ENCODE measurements at regions of chr22 and their contacts with region 1.

Region 1: DNA sequence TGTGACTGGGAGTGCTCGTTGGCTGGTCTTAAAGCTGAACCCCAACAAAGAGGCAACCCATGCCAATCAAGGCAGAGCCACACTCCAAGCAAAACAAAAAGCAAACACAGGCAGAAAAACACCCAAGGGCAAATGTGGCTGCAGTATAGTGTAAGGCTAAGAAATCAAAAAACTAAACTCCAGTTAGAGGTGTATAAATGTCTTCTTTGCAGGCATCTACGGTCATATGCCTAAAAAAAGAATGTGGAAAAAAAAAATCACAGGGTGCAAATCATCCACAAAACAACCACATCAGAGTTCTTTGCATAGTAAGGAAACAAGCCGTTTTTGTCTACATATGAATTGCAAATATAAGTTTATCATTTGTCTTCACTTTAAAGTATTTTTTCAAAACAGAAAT is 27.8 kb downstream of the ARFGAP3 start:
- DNase-seq: no peak
- ATAC-seq: no peak
- H3K4me3 ChIP-seq: no peak overlapping the region
- H3K4me3 Mint-ChIP-seq: peak overlapping the region in 1 of 3 donors; percentile 28
- H3K27ac ChIP-seq: no peak overlapping the region
- H3K27ac Mint-ChIP-seq: peak overlapping the region in 1 of 2 donors; percentile 72
- H3K4me1 ChIP-seq: peaks cover 3 to 20% of the 10 kb centered on the region in 2 experiments
- H3K4me1 Mint-ChIP-seq: peaks cover 12 to 20% (median 17%) of the 10 kb centered on the region in 3 donors
- H3K27me3 ChIP-seq: no peaks in the 10 kb centered on the region
- H3K27me3 Mint-ChIP-seq: no peaks in the 10 kb centered on the region

Region 2: DNA sequence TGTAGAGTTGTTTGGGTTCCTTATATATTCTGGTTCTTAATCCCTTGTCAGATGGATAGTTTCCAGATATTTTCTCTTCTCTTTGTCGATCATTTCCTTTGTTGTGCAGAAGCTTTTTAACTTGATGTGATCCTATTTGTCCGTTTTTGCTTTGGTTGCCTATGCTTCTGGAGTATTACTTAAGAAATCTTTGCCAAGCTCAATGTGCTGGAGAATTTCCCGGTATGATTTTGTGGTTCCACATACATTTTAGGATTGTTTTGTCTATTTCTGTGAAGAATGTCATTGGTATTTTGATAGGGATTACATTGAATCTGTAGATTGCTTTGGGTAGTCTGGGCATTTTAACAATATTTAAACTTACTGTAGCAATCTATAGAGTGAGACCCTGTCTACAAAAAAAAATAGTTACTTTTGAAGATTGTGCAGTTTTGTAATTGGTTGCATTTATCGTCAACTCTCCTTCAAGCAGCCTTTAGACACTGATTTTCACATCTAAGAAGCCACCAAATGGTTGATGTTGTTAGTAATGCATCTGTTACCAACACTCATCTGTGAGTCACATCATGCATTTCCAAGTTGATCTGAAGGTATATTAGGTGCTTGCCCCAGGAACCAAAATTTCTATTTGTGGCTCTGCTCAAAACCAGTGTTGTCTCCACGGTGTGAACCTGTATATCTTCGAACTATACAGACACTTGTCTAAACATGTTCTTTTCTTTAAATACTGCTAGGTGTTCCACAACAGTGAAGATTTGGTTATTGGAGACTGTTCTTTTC is 1186.8 kb before region 1 on chr22:
- CTCF ChIA-PET with region 1: interaction called in 1 of 2 experiments, 11 read pairs
- POLR2A ChIA-PET with region 1: no interaction called
- DNase-seq: no peak
- ATAC-seq: no peak
- H3K4me3 ChIP-seq: no peak overlapping the region
- H3K4me3 Mint-ChIP-seq: no peak overlapping the region
- H3K27ac ChIP-seq: no peak overlapping the region
- H3K27ac Mint-ChIP-seq: peak overlapping the region in 1 of 2 donors; percentile 19
- H3K4me1 ChIP-seq: no peaks in the 10 kb centered on the region
- H3K4me1 Mint-ChIP-seq: peaks cover 5 to 14% (median 10%) of the 10 kb centered on the region in 3 donors
- H3K27me3 ChIP-seq: no peaks in the 10 kb centered on the region
- H3K27me3 Mint-ChIP-seq: no peaks in the 10 kb centered on the region

Region 3: GRCh38 chr22:42769574-42770447 is 59.5 kb before region 1 on chr22:
- CTCF ChIA-PET with region 1: no interaction called
- POLR2A ChIA-PET with region 1: no interaction called
- DNase-seq: no peak
- ATAC-seq: peak in 1 of 4 experiments; percentile 19
- H3K4me3 ChIP-seq: no peak overlapping the region
- H3K4me3 Mint-ChIP-seq: no peak overlapping the region
- H3K27ac ChIP-seq: no peak overlapping the region
- H3K27ac Mint-ChIP-seq: no peak overlapping the region
- H3K4me1 ChIP-seq: no peaks in the 10 kb centered on the region
- H3K4me1 Mint-ChIP-seq: peaks cover 0 to 3% (median 0%) of the 10 kb centered on the region in 3 donors
- H3K27me3 ChIP-seq: peaks cover 0 to 40% of the 10 kb centered on the region in 2 experiments
- H3K27me3 Mint-ChIP-seq: peaks cover 7 to 23% of the 10 kb centered on the region in 2 donors

Region 4: GRCh38 chr22:42841444-42841843 is 12.1 kb after region 1 on chr22:
- CTCF ChIA-PET with region 1: no interaction called
- POLR2A ChIA-PET with region 1: interaction called in 1 of 2 experiments, 10 read pairs
- DNase-seq: no peak
- ATAC-seq: no peak
- H3K4me3 ChIP-seq: no peak overlapping the region
- H3K4me3 Mint-ChIP-seq: no peak overlapping the region
- H3K27ac ChIP-seq: no peak overlapping the region
- H3K27ac Mint-ChIP-seq: peak overlapping the region in 1 of 2 donors; percentile 57
- H3K4me1 ChIP-seq: peaks cover 4 to 8% of the 10 kb centered on the region in 2 experiments
- H3K4me1 Mint-ChIP-seq: peaks cover 21 to 29% (median 26%) of the 10 kb centered on the region in 3 donors
- H3K27me3 ChIP-seq: no peaks in the 10 kb centered on the region
- H3K27me3 Mint-ChIP-seq: no peaks in the 10 kb centered on the region